ENCODE measurements at regions of chr11 and their contacts with region 1.

Region 1: DNA sequence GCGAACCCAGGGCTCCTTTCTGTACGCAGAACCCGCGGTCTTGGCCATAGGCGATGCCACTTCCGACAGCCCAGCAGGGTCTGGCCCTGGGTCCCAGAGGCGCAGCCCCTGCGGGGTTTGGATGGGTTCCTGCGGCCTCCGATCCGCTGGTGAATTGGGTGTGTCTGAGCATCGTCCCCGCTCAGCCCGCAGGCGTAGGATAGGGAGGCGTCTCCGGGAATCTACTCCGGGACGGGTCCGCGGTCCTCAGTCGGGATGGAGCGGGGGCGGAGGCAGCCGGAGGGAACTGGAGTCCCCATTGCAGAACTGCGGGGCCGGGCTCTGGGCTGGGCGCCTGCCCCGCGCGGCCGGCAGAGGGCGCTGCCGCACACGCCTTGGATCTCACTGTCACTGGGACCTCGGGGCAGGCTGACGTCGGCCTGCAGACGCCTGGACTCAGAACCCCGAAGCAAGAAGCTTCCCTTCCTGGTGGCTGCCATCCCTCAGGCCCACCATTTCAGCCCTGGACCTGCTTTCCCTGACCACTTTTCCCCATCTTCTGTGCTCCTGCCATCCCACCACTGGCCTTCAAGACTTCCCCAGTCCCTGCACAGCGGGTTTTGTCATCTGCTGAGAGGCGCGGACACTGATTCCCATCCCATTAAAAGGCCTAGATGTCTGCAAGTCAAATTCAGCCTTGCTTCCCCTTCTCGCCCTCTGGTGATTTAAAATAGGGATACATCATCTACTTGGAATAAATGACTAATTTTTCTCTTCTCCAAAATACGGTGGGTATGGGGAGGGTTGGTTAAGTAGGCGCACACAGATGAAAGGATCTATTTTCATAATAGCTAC is 38.3 kb upstream of the CREB3L1 start:
- DNase-seq: peak; percentile 86
- H3K4me3 Mint-ChIP-seq: peak overlapping the region; percentile 75
- H3K27ac Mint-ChIP-seq: no peak overlapping the region
- H3K4me1 Mint-ChIP-seq: peaks cover 36% of the 10 kb centered on the region
- H3K27me3 Mint-ChIP-seq: peaks cover 4% of the 10 kb centered on the region

Region 2: GRCh38 chr11:45917623-45918330 is 321.4 kb before region 1 on chr11 and contains the start of gene PEX16:
- CTCF ChIA-PET with region 1: no interaction called
- intact Hi-C with region 1: loop called (anchors 1 kb)
- DNase-seq: peak; percentile 96
- H3K4me3 Mint-ChIP-seq: peak within 1 kb of the TSS; percentile 88
- H3K27ac Mint-ChIP-seq: peak within 1 kb of the TSS; percentile 96
- H3K4me1 Mint-ChIP-seq: peaks cover 24% of the 10 kb centered on the region
- H3K27me3 Mint-ChIP-seq: peaks cover 3% of the 10 kb centered on the region
- total RNA-seq, gene PEX16: 28.6 to 32.5 TPM

Region 3: DNA sequence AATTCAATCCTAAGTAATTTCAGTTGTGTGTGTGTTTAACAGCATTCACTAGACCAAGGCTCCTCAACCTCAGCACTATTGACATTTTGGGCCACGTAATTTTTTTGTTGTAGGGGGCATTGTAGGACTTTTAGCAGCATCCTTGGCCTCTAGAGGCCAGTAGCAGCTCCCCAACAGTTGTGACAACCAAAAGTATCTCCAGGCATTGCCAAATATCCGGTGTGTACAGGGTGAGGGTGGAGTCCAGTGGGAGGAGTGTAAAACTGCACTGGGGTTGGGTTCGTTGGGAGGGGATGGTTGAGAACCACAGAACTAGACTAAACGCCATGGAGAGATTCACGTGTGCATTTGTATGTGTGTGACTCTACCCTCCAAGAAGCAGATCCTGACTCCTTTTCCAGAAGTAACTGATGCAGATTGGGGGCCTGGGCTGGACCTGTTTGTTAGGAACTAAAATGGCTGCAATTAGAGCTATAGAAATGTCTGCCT is 112.0 kb before region 1 on chr11:
- CTCF ChIA-PET with region 1: interaction called, 11 read pairs
- intact Hi-C with region 1: loop called (anchors 1 kb)
- DNase-seq: peak; percentile 73
- H3K4me3 Mint-ChIP-seq: peak overlapping the region; percentile 25
- H3K27ac Mint-ChIP-seq: peak overlapping the region; percentile 5
- H3K4me1 Mint-ChIP-seq: peaks cover 23% of the 10 kb centered on the region
- H3K27me3 Mint-ChIP-seq: no peaks in the 10 kb centered on the region

Region 4: GRCh38 chr11:46315033-46315738 is 76.0 kb after region 1 on chr11:
- CTCF ChIA-PET with region 1: interaction called, 298 read pairs
- intact Hi-C with region 1: loop called (anchors 1 kb)
- DNase-seq: peak; percentile 85
- H3K4me3 Mint-ChIP-seq: no peak overlapping the region
- H3K27ac Mint-ChIP-seq: no peak overlapping the region
- H3K4me1 Mint-ChIP-seq: peaks cover 20% of the 10 kb centered on the region
- H3K27me3 Mint-ChIP-seq: no peaks in the 10 kb centered on the region

Region 5: DNA sequence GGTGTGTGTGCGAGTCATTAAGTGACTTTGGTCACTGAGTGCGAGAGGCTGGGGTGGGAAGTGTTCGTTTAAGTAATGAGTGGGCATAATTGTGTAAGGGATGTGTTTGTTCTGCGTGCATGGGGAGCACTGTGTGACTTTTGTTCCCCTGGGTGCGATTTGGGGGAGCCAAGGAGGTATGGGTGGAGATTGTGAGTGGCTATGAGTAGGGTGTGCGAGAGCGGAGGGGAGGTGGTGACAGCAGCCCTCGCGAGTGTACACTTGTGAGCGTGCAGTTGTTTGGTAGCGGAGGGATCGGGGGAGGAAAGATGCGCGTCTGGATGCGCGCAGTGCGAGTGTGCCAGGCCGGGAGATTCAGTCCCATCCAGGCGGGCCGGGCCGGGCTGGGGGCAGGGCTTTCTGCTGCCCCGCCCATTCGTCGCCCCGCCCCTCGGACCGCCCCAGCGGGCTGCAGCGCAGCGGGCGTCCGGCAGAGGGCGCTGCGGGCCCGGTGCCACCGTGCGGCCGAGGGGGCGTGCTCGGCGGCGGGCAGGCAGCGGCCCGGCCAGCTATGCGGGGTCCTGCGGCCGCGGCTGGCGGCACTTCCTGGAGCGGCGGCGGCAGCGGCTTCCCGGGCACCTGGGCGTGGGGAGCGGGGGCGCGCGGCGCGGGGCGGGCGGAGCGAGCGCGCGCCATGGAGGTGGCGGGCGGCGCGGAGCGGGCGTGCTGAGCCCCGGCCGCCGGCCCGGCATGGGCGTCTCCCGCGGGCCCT is 107.9 kb after region 1 on chr11 and contains the start of gene DGKZ:
- CTCF ChIA-PET with region 1: interaction called, 50 read pairs
- intact Hi-C with region 1: loop called (anchors 1 kb)
- DNase-seq: peak; percentile 86
- H3K4me3 Mint-ChIP-seq: peak within 1 kb of the TSS; percentile 84
- H3K27ac Mint-ChIP-seq: peak within 1 kb of the TSS; percentile 92
- H3K4me1 Mint-ChIP-seq: peaks cover 80% of the 10 kb centered on the region
- H3K27me3 Mint-ChIP-seq: no peaks in the 10 kb centered on the region
- total RNA-seq, gene DGKZ: 82.9 to 89.2 TPM

Region 6: DNA sequence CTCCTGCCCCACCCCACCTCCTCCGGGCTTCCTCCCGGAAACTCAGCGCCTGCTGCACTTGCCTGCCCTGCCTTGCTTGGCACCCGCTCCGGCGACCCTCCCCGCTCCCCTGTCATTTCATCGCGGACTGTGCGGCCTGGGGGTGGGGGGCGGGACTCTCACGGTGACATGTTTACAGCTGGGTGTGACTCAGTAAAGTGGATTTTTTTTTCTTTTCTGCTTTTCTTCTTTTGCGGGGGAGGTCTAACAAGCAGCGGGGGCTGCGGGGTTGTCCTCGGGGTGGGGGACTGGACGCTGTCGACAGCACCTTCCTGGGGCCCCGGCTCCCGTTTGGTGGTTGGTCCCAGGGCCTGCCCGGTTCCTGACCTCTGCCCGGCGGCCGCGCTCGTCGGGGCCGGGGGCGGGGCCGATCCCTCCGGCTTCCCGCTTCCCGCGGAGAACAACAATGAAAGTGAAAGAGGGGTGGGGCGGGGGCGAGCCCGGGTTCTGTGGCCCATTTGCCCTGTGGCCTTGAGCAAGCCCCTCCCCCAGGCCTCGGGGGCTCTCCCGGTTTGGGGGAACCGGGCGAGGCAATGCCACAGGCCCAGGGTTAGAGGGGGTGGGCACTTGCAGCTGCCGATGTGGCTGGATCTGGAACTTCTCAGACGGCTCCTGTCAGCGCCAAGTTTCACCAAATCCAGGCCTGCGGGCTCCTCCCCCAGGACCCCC is 141.3 kb after region 1 on chr11:
- CTCF ChIA-PET with region 1: interaction called, 3 read pairs
- intact Hi-C with region 1: loop called (anchors 1 kb)
- DNase-seq: peak; percentile 90
- H3K4me3 Mint-ChIP-seq: peak overlapping the region; percentile 67
- H3K27ac Mint-ChIP-seq: peak overlapping the region; percentile 15
- H3K4me1 Mint-ChIP-seq: peaks cover 11% of the 10 kb centered on the region
- H3K27me3 Mint-ChIP-seq: peaks cover 7% of the 10 kb centered on the region